ENCODE measurements at regions of chr5 and their contacts with region 1.

Region 1: GRCh38 chr5:142699184-142699720 is 13.4 kb upstream of the FGF1 start:
- DNase-seq: peak; percentile 90 to 91
- H3K4me3 ChIP-seq: no peak overlapping the region
- H3K27ac ChIP-seq: peak overlapping the region; percentile 63 to 64
- H3K4me1 ChIP-seq: peaks cover 8 to 13% of the 10 kb centered on the region in 2 donors
- H3K27me3 ChIP-seq: no peaks in the 10 kb centered on the region
- CTCF ChIP-seq: peak; percentile 94 to 98 (median 96)
- POLR2A ChIP-seq: no peak

Region 2: DNA sequence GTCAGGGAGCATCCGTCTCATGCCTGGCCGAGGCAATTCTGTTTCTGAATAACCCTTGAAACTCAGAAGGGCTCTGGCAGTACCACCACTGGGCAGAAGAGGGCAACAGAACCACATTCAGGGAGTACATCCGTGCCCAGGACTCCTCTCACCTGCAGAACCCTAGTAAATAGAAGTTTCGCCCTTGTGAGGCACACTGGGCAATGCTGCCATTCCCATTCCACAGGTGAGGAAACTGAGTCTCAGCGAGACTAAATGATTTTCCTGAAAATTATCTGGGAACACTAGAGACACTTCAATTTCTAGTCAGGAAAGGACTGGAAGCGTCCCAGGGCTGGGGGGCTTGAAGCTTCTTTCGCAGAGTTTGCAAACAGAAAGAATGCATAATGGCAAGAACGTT is 88.1 kb before region 1 on chr5:
- intact Hi-C with region 1: loop called (anchors 5 kb)
- DNase-seq: peak; percentile 78 to 82
- H3K4me3 ChIP-seq: no peak overlapping the region
- H3K27ac ChIP-seq: no peak overlapping the region
- H3K4me1 ChIP-seq: no peaks in the 10 kb centered on the region
- H3K27me3 ChIP-seq: no peaks in the 10 kb centered on the region
- CTCF ChIP-seq: peak; percentile 86 to 97 (median 88)
- POLR2A ChIP-seq: no peak

Region 3: GRCh38 chr5:142644640-142645361 is 54.5 kb before region 1 on chr5:
- intact Hi-C with region 1: no loop called
- DNase-seq: peak; percentile 76 to 86
- H3K4me3 ChIP-seq: no peak overlapping the region
- H3K27ac ChIP-seq: peak overlapping the region; percentile 57 to 69
- H3K4me1 ChIP-seq: peaks cover 0 to 12% of the 10 kb centered on the region in 2 donors
- H3K27me3 ChIP-seq: no peaks in the 10 kb centered on the region
- CTCF ChIP-seq: no peak
- POLR2A ChIP-seq: no peak

Region 4: GRCh38 chr5:142655339-142656267 is 43.6 kb before region 1 on chr5:
- intact Hi-C with region 1: loop called (anchors 5 kb)
- DNase-seq: peak; percentile 87 to 93
- H3K4me3 ChIP-seq: no peak overlapping the region
- H3K27ac ChIP-seq: peak overlapping the region; percentile 58 to 61
- H3K4me1 ChIP-seq: no peaks in the 10 kb centered on the region
- H3K27me3 ChIP-seq: no peaks in the 10 kb centered on the region
- CTCF ChIP-seq: peak; percentile 89 to 98 (median 96)
- POLR2A ChIP-seq: no peak

Region 5: GRCh38 chr5:142900927-142901326 is 201.7 kb after region 1 on chr5:
- intact Hi-C with region 1: no loop called
- DNase-seq: no peak
- H3K4me3 ChIP-seq: no peak overlapping the region
- H3K27ac ChIP-seq: no peak overlapping the region
- H3K4me1 ChIP-seq: no peaks in the 10 kb centered on the region
- H3K27me3 ChIP-seq: no peaks in the 10 kb centered on the region
- CTCF ChIP-seq: no peak
- POLR2A ChIP-seq: no peak

Measured in uterus (tissue), 4 donors.